ENCODE measurements at regions of chr3 and their contacts with region 1.

Region 1: DNA sequence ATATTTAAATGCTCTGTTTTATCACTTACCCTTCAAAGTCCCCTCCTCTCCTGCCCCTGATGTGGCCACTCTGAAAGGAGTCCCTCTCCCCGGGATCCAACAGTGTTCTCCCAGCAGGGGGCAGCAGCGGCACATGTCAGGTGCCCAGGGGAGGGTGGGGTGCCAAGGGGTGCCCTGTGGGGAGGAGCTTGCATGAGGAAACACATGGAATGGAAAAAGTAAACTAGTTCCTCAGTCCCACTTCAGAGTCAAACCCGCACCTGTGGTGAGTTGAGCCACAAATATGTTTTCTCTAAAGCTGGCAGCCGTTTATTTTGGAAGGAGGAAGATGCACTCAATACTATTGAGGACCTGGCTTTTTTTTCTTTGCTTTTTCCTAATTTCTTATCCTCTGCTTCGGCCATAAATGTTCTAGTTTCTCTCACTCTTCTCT is 30.1 kb upstream of the NRROS start:
- DNase-seq: peak; percentile 75 to 98 (median 89)
- ATAC-seq: peak; percentile 81 to 92 (median 90)
- H3K4me3 ChIP-seq: no peak overlapping the region
- H3K4me3 Mint-ChIP-seq: peak overlapping the region; percentile 51 to 64 (median 59)
- H3K27ac ChIP-seq: peak overlapping the region; percentile 47
- H3K27ac Mint-ChIP-seq: peak overlapping the region; percentile 88 to 92
- H3K4me1 ChIP-seq: peaks cover 22 to 46% of the 10 kb centered on the region in 2 experiments
- H3K4me1 Mint-ChIP-seq: peaks cover 34 to 41% (median 41%) of the 10 kb centered on the region in 3 donors
- H3K27me3 ChIP-seq: peaks cover 0 to 3% of the 10 kb centered on the region in 2 experiments
- H3K27me3 Mint-ChIP-seq: no peaks in the 10 kb centered on the region

Region 2: GRCh38 chr3:196409409-196409808 is 199.9 kb before region 1 on chr3:
- CTCF ChIA-PET with region 1: no interaction called
- POLR2A ChIA-PET with region 1: no interaction called
- DNase-seq: no peak
- ATAC-seq: peak in 1 of 4 experiments; percentile 38
- H3K4me3 ChIP-seq: no peak overlapping the region
- H3K4me3 Mint-ChIP-seq: no peak overlapping the region
- H3K27ac ChIP-seq: no peak overlapping the region
- H3K27ac Mint-ChIP-seq: no peak overlapping the region
- H3K4me1 ChIP-seq: peaks cover 0 to 2% of the 10 kb centered on the region in 2 experiments
- H3K4me1 Mint-ChIP-seq: peaks cover 28 to 38% (median 29%) of the 10 kb centered on the region in 3 donors
- H3K27me3 ChIP-seq: no peaks in the 10 kb centered on the region
- H3K27me3 Mint-ChIP-seq: no peaks in the 10 kb centered on the region

Region 3: GRCh38 chr3:196423044-196423781 is 186.1 kb before region 1 on chr3:
- CTCF ChIA-PET with region 1: no interaction called
- POLR2A ChIA-PET with region 1: no interaction called
- DNase-seq: no peak
- ATAC-seq: no peak
- H3K4me3 ChIP-seq: no peak overlapping the region
- H3K4me3 Mint-ChIP-seq: no peak overlapping the region
- H3K27ac ChIP-seq: no peak overlapping the region
- H3K27ac Mint-ChIP-seq: no peak overlapping the region
- H3K4me1 ChIP-seq: peaks cover 0 to 14% of the 10 kb centered on the region in 2 experiments
- H3K4me1 Mint-ChIP-seq: peaks cover 61 to 74% (median 63%) of the 10 kb centered on the region in 3 donors
- H3K27me3 ChIP-seq: no peaks in the 10 kb centered on the region
- H3K27me3 Mint-ChIP-seq: no peaks in the 10 kb centered on the region

Region 4: DNA sequence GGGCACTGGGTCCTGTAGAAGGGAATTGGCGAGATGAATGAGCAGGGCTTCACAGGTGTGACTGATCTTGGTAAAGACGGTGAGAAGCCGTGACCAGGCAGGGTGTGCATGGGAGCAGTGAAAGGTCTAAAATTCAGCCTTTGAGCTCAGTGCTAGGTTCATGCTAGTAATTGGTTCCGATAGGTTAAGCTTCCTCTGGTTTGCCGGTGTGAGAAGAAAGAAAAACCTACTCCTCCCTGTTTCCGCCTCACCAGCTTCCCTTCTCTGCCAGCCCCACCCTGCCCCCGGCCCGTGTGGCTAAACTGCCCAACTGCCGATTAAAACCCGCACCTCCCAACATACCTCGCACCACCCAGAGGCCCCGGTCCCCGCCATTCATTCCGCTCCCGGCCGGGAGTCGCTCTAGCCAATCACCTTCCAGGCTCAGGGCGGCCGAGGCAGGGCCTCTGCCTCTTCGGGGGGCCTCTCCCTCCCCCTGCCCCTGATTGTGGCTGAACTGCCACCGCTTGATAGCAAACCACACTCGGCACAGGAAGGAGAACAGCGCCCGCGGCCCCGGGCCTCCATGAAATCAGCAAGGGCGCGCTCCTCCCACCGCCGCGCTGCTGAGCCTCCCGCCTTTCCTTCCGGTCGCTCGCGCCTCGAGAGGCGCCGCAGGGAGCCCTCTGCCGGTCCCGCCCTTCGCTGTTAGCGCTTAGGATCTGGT is 22.8 kb after region 1 on chr3:
- CTCF ChIA-PET with region 1: interaction called, 3 to 19 read pairs
- POLR2A ChIA-PET with region 1: interaction called in 1 of 2 experiments, 3 read pairs
- DNase-seq: peak; percentile 79 to 94 (median 88)
- ATAC-seq: peak; percentile 86 to 89 (median 88)
- H3K4me3 ChIP-seq: peak overlapping the region; percentile 38 to 66
- H3K4me3 Mint-ChIP-seq: peak overlapping the region; percentile 81 to 88 (median 86)
- H3K27ac ChIP-seq: peak overlapping the region; percentile 78
- H3K27ac Mint-ChIP-seq: peak overlapping the region; percentile 95 to 98
- H3K4me1 ChIP-seq: peaks cover 35 to 77% of the 10 kb centered on the region in 2 experiments
- H3K4me1 Mint-ChIP-seq: peaks cover 56 to 64% (median 63%) of the 10 kb centered on the region in 3 donors
- H3K27me3 ChIP-seq: no peaks in the 10 kb centered on the region
- H3K27me3 Mint-ChIP-seq: no peaks in the 10 kb centered on the region

Region 5: GRCh38 chr3:196677353-196677752 is 68.0 kb after region 1 on chr3:
- CTCF ChIA-PET with region 1: interaction called, 5 to 13 read pairs
- POLR2A ChIA-PET with region 1: no interaction called
- DNase-seq: no peak
- ATAC-seq: no peak
- H3K4me3 ChIP-seq: no peak overlapping the region
- H3K4me3 Mint-ChIP-seq: no peak overlapping the region
- H3K27ac ChIP-seq: no peak overlapping the region
- H3K27ac Mint-ChIP-seq: no peak overlapping the region
- H3K4me1 ChIP-seq: peaks cover 5 to 9% of the 10 kb centered on the region in 2 experiments
- H3K4me1 Mint-ChIP-seq: peaks cover 9 to 20% (median 14%) of the 10 kb centered on the region in 3 donors
- H3K27me3 ChIP-seq: no peaks in the 10 kb centered on the region
- H3K27me3 Mint-ChIP-seq: no peaks in the 10 kb centered on the region

Region 6: DNA sequence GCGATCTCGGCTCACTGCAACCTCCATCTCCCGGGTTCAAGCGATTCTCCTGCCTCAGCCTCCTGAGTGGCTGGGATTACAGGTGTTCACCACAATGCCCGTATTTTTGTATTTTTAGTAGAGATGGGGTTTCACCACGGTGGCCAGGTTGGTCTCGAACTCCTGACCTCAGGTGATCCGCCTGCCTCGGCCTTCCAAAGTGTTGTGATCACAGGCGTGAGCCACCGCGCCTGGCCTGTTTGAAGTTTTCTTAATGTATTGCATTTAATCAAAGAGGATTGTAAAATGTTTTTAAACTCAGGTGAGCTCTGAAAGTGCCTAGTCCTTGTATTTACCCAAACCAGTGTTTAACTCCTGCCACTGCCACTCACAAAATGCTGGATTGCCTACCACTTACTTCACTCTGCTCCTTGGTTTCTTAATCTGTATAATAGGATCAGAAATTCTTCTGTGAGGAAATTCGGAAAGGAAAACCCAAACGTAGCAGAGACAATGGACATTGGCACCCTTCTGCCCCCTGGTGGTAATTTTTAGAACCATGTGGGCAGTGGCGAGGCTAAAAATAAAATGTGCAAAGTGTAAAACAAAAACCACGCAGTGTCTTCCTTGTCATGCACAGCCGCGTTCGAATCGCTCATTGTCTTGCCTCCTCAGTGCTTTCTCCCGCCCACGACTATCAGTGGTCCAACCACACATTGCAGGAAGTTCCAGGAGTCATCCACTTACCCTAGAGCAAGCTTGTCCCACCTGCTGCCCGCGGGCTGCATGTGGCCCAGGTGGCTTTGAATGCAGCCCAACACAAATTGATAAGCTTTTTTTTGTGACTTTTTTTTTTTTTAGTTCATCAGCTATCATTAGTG is 75.4 kb after region 1 on chr3:
- CTCF ChIA-PET with region 1: interaction called, 13 to 106 read pairs
- POLR2A ChIA-PET with region 1: interaction called in 1 of 2 experiments, 10 read pairs
- DNase-seq: peak; percentile 6 to 85 (median 49)
- ATAC-seq: peak; percentile 70 to 88 (median 84)
- H3K4me3 ChIP-seq: peak overlapping the region; percentile 11 to 23
- H3K4me3 Mint-ChIP-seq: peak overlapping the region; percentile 25 to 62 (median 48)
- H3K27ac ChIP-seq: no peak overlapping the region
- H3K27ac Mint-ChIP-seq: peak overlapping the region; percentile 58 to 85
- H3K4me1 ChIP-seq: peaks cover 7 to 11% of the 10 kb centered on the region in 2 experiments
- H3K4me1 Mint-ChIP-seq: peaks cover 11 to 17% (median 15%) of the 10 kb centered on the region in 3 donors
- H3K27me3 ChIP-seq: no peaks in the 10 kb centered on the region
- H3K27me3 Mint-ChIP-seq: no peaks in the 10 kb centered on the region

Region 7: DNA sequence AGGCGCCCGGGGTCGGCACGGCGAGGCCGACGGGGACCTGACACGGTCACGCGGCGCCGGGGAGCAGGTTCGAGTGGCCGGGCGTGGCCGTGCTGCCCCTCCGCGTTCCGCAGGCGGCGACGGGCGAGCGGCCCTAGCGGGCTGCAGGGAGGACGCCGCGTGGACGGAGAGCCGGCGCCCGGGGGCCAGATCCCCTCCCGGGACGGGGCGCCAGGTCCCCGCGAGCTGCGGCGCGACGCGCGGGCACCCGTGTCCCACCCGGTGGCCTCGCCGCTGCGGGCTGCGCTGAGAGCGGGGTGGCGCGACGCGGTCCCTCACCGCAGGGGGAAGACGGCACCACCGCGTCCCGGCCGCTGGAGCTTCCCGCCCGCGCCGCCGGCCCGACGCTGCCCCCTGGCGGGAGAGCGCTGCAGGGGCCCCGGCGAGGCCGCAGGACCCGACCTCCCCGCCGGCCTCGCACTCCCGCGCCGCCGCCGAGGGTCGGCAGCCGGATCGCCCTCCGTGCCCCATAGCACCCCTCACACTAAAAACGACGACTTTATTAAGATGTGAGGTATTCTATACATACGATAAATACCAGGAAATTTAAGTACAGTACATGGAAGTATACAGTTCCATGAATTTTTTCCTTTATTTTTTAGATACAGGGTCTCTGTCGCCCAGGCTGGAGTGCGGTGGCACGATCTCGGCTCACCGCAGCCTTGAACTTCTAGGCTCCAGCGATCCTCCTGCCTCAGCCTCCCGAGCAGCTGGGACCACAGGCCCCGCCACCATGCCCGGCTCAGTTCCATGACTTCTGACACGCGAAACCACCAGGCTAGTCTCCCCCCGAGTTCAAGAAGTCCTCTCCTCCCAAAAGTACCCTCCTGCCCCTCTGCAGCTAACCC is 360.5 kb after region 1 on chr3:
- CTCF ChIA-PET with region 1: no interaction called
- POLR2A ChIA-PET with region 1: no interaction called
- DNase-seq: peak in 33 of 35 experiments; percentile 26 to 84 (median 47)
- ATAC-seq: peak; percentile 76 to 84 (median 79)
- H3K4me3 ChIP-seq: peak overlapping the region; percentile 46 to 68
- H3K4me3 Mint-ChIP-seq: peak overlapping the region; percentile 68 to 74 (median 73)
- H3K27ac ChIP-seq: no peak overlapping the region
- H3K27ac Mint-ChIP-seq: no peak overlapping the region
- H3K4me1 ChIP-seq: peaks cover 0 to 11% of the 10 kb centered on the region in 2 experiments
- H3K4me1 Mint-ChIP-seq: peaks cover 8 to 16% (median 9%) of the 10 kb centered on the region in 3 donors
- H3K27me3 ChIP-seq: peaks cover 0 to 26% of the 10 kb centered on the region in 2 experiments
- H3K27me3 Mint-ChIP-seq: peaks cover 0 to 12% of the 10 kb centered on the region in 2 donors